ENCODE measurements at regions of chr11 and their contacts with region 1.

Region 1: DNA sequence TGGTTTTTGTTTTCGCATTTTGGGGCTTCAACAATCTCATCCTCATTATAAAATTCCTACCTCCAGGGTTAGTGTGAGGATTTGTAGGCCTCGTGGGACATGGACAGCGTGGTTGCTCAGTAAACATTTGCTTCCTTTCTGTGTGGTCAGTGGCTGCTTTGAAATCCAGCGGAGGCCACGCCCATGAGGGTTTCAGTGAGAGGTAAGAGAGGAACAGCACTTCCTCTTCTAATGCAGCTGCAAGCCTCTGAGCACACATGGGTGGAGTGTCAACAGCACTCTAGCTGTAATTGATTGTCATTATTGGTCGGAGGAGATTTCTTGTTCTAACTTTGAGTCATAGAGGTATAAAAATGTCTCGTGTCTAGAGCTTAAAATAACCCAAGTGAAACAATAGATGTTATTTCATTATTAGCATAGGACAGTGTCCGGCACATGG is 6.0 kb upstream of the ARHGAP42 start:
- DNase-seq: no peak

Region 2: GRCh38 chr11:100575870-100576705 is 105.0 kb before region 1 on chr11:
- intact Hi-C with region 1: loop called (anchors 5 kb)
- DNase-seq: no peak

Region 3: DNA sequence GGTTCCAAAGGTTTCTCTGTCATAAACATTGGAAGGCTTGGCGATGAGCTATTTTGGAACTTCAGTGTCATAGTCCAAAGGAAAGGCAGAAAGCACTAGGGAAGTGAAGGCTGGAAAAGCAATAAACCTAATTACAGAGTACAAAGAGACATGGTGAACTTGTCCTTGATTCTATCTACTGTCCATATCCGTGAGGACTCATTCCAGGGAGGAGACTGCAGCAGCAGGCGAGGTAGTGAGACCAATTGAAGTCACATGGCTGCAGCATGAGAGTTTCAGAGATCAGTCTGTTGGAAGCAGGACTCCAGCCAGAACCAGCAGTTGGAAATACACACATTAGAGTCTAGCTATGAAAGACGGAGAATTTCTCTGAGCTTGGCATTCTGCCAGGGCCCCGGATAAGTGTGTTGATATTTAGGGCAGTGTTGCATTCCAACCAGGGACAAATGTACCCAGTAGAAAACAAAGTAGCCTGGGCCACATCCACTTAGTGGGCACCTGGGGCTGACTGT is 48.1 kb before region 1 on chr11:
- intact Hi-C with region 1: no loop called
- DNase-seq: peak; percentile 81

Region 4: GRCh38 chr11:100719809-100720221 is 38.7 kb after region 1 on chr11:
- intact Hi-C with region 1: no loop called
- DNase-seq: no peak

Region 5: DNA sequence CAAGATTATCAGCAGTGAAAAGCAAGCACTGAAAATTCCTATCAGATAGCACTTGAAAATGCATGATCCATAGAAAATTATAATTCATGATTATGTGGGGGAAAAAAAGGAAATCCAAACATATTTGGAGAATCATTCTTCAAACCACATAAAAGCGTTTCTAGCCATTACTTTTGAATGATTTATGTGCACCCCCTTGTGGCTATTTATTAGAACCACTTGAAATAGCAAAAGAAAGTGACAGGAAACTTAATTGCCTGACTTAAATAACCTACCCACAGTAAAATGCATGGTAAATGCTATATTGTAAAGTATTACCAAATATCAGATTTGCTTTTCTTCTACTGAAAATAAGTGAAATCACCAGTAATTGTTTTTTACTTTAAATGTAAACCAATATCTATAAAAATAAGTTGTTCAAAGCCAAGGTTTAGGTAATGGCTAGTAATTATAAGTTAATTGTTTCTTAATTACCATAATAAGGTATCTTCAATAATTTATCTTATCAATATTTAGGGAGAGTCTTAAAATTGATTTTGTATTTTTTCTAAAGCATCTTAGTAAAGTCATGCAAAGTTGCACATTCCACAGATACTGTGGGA is 174.5 kb after region 1 on chr11:
- intact Hi-C with region 1: loop called (anchors 2 kb)
- DNase-seq: no peak